ENCODE measurements at regions of chr7 and their contacts with region 1.

Region 1: DNA sequence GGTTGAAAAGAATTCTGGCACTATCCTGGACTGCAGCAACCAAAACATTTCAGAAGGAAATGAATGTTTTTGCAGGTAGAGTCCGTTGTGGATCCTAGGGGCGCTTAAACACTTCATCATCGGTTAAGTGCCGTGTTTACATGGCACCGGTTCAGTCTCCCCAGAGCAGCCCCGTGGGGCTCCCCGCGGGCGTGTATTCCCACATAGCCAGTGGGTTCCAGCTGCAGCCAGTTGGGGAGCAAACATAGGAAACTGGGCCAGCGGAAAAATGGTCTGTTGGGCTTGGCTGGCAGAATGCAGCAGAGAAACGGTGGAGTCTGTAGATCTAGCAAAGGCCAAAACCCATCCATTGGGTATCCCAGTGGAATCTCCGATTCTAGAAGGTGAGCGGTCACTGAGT is 113.0 kb upstream of the SH2B2 start:
- DNase-seq: no peak
- ATAC-seq: no peak
- H3K4me3 ChIP-seq: no peak overlapping the region
- H3K27ac ChIP-seq: no peak overlapping the region
- H3K4me1 ChIP-seq: no peaks in the 10 kb centered on the region
- H3K27me3 ChIP-seq: no peaks in the 10 kb centered on the region
- CTCF ChIP-seq: no peak
- EP300 ChIP-seq: no peak
- POLR2A ChIP-seq: no peak
- RAD21 ChIP-seq: no peak

Region 2: DNA sequence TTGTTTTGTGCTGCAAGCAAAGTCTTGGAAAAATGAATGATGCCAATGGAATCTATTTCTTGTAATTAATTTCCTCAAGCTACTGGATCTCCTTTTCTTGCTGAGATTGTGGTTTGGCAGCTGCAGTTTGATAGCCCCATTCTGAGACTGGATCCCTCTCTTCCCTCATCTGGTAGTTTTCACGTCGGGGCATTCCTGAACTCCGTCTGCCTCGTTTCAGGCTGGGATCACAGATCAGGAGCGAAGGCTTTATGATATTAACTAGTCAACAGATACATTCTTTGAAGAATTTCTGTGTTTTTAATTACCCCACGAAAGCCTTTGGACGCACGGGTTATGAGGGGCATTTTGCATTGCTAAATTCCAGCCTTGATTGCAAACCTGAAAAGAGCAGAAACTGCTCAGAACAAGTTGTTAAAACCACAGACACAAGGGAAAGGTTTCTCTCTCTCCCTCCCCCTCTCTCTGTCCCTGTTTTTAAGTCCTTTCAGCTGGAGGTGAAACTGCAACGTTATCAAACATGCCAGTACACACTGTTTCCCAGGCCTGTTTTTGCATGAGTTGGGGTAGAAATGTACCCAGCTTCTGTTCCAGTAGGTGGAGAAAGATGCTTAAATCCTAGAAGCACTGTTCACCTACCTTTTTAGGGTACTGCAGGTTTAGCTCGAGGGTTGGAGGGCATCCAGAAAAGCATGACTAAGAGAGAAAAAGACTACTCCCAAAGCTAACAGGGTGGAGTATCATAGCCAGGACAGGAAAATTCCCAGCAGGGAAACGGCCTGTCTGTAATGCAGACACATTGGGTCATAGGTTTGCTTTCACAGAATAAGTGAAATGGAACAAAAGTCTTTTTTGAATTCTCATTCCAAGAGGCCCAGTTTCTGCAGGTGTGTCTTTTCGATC is 231.9 kb before region 1 on chr7:
- CTCF ChIA-PET with region 1: no interaction called
- POLR2A ChIA-PET with region 1: interaction called, 10 read pairs
- RAD21 ChIA-PET with region 1: no interaction called
- SMC1A ChIA-PET with region 1: no interaction called
- in situ Hi-C with region 1: no loop called
- intact Hi-C with region 1: no loop called
- DNase-seq: no peak
- ATAC-seq: peak; percentile 27
- H3K4me3 ChIP-seq: no peak overlapping the region
- H3K27ac ChIP-seq: peak overlapping the region; percentile 1; the same call in 1 of the 2 replicates
- H3K4me1 ChIP-seq: peaks cover 38% of the 10 kb centered on the region
- H3K27me3 ChIP-seq: no peaks in the 10 kb centered on the region
- CTCF ChIP-seq: no peak
- EP300 ChIP-seq: no peak
- POLR2A ChIP-seq: no peak
- RAD21 ChIP-seq: 0 out of 2 replicates have a peak, but pooled peaks have one; percentile 2

Region 3: GRCh38 chr7:102193806-102194205 is 20.1 kb after region 1 on chr7:
- CTCF ChIA-PET with region 1: no interaction called
- POLR2A ChIA-PET with region 1: no interaction called
- RAD21 ChIA-PET with region 1: no interaction called
- SMC1A ChIA-PET with region 1: no interaction called
- in situ Hi-C with region 1: no loop called
- intact Hi-C with region 1: no loop called
- DNase-seq: no peak
- ATAC-seq: no peak
- H3K4me3 ChIP-seq: no peak overlapping the region
- H3K27ac ChIP-seq: no peak overlapping the region
- H3K4me1 ChIP-seq: no peaks in the 10 kb centered on the region
- H3K27me3 ChIP-seq: no peaks in the 10 kb centered on the region
- CTCF ChIP-seq: no peak
- EP300 ChIP-seq: no peak
- POLR2A ChIP-seq: no peak
- RAD21 ChIP-seq: no peak

Measured in GM12878 (cell line).